Head of caudate nucleus (tissue), 42 donors: ENCODE measurements at regions of chr20 and their contacts with region 1.

Region 1: GRCh38 chr20:9912858-9913434 is 74.1 kb upstream of the PAK5 start:
- DNase-seq: peak in 41 of 42 donors; percentile 18 to 85 (median 59)

Region 2: GRCh38 chr20:9616833-9617489 is 296.0 kb before region 1 on chr20:
- intact Hi-C with region 1: loop called (anchors 10 kb)
- DNase-seq: peak; percentile 29 to 90 (median 72)